ENCODE measurements at regions of chr2 and their contacts with region 1.

Region 1: GRCh38 chr2:217785544-217786045 is 217.2 kb downstream of the TNS1 start:
- DNase-seq: peak; percentile 85
- ATAC-seq: peak; percentile 64
- H3K4me3 Mint-ChIP-seq: no peak overlapping the region
- H3K27ac Mint-ChIP-seq: peak overlapping the region; percentile 39
- H3K4me1 Mint-ChIP-seq: peaks cover 11% of the 10 kb centered on the region
- H3K27me3 Mint-ChIP-seq: no peaks in the 10 kb centered on the region
- CTCF ChIP-seq: peak; percentile 93

Region 2: DNA sequence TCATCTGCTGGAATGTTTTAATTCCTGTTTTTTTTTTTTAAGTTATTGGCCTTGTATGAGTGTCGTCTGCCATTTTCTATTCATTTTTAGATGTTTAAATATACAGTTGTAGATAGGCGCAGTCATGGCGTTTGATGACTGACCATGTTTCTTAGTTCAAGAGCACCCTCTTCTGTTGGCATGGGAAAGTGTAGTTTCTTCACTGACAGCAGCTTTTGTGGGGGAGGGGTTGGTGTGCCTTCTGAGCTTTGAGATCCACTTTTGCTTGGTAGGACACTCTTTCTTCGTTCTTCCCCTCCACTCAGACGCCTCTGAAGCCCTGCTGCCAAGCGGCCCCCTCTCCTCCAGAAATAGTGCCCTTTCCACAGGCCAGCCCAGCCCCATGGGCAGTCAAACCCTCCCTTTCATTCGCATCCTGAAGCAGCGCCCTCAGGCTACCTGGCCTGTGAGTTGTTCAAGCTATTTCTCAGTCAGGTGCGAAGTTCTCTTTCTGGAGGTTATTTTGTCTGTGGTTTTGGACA is 274.8 kb before region 1 on chr2:
- CTCF ChIA-PET with region 1: no interaction called
- POLR2A ChIA-PET with region 1: no interaction called
- intact Hi-C with region 1: no loop called
- DNase-seq: peak; percentile 69
- ATAC-seq: peak; percentile 89
- H3K4me3 Mint-ChIP-seq: no peak overlapping the region
- H3K27ac Mint-ChIP-seq: no peak overlapping the region
- H3K4me1 Mint-ChIP-seq: peaks cover 8% of the 10 kb centered on the region
- H3K27me3 Mint-ChIP-seq: peaks cover 1% of the 10 kb centered on the region
- CTCF ChIP-seq: peak; percentile 70

Region 3: DNA sequence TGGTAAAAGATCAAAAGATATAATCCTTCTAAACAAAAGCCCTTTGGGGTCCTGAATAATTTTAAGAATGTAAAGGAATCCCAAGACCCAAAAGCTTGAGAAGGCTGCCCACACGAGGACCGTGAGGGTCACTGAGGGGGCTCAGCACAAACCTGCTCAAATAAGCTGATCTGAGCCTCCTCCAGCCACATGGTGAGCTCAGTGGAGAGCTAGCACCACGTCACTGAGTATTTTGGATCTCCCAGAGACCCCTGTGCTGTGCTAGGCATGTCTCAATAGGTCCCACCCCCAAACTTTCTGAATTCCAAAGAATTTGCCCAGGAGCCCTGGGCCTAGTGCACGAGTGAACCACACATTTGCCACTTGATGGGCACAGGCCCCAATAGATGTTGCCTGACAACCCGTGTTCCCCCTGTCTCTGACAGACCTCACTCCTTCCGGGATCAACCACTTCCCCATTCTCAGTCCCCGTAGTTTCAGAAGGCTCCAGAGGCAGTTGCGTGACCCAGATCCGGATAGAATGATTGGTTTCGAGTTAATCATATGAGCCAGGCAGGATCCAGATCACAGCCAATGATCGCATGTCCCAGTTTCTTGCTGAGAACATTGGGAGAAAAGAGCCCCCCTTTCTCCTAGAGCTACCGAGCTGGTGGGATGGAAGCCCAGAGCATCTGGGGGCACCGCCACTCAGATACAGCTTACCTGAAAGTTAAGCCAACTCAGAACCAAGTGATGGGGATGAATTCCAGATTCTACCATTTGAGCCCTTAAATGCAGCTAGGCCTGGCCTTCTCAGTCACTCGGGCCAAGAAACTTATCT is 13.4 kb after region 1 on chr2:
- CTCF ChIA-PET with region 1: interaction called, 26 read pairs
- POLR2A ChIA-PET with region 1: no interaction called
- intact Hi-C with region 1: no loop called
- DNase-seq: no peak
- ATAC-seq: no peak
- H3K4me3 Mint-ChIP-seq: no peak overlapping the region
- H3K27ac Mint-ChIP-seq: no peak overlapping the region
- H3K4me1 Mint-ChIP-seq: no peaks in the 10 kb centered on the region
- H3K27me3 Mint-ChIP-seq: no peaks in the 10 kb centered on the region
- CTCF ChIP-seq: no peak

Region 4: DNA sequence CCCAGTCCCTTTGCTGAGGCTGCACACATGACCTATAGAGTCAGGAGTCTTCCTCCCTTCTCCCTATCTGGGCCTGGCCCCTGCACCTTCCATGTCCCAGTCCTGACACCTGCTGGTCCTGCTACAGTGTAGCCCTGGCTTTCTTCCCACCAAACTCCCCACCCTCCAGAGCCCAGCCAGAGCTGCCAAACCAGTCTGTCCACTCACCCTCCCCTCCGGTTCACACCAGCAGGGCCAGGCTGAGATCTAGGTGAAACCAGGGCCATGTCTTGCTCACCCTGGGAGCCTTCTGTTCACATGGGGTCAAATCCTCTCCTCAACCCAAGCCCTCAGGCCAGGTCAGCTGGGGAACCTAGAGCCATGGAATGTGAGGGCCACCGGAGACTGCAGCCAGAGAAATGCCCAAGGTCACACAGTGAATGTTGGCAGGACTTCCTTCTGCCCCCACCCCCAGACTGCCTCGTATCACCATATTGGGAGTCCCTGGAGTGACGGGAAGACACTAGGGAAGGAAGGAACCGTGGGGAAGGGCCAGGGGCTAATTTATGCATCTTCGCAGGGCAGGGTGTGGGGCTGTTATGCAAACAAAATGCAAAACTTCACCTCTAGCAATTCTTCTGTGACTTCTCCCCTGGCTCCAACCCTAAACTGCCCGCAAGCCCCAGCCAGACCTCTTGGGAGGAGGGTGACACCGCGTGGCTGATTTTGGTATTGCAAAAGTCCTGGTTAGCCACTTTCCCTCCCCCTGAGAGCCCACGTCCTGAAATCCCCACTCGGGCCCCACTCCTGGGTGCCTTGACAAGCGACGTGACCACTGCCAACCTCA is 202.6 kb after region 1 on chr2:
- CTCF ChIA-PET with region 1: interaction called, 129 read pairs
- POLR2A ChIA-PET with region 1: no interaction called
- intact Hi-C with region 1: loop called (anchors 1 kb)
- DNase-seq: peak; percentile 86
- ATAC-seq: peak; percentile 83
- H3K4me3 Mint-ChIP-seq: no peak overlapping the region
- H3K27ac Mint-ChIP-seq: peak overlapping the region; percentile 30
- H3K4me1 Mint-ChIP-seq: peaks cover 10% of the 10 kb centered on the region
- H3K27me3 Mint-ChIP-seq: peaks cover 5% of the 10 kb centered on the region
- CTCF ChIP-seq: peak; percentile 91

Region 5: DNA sequence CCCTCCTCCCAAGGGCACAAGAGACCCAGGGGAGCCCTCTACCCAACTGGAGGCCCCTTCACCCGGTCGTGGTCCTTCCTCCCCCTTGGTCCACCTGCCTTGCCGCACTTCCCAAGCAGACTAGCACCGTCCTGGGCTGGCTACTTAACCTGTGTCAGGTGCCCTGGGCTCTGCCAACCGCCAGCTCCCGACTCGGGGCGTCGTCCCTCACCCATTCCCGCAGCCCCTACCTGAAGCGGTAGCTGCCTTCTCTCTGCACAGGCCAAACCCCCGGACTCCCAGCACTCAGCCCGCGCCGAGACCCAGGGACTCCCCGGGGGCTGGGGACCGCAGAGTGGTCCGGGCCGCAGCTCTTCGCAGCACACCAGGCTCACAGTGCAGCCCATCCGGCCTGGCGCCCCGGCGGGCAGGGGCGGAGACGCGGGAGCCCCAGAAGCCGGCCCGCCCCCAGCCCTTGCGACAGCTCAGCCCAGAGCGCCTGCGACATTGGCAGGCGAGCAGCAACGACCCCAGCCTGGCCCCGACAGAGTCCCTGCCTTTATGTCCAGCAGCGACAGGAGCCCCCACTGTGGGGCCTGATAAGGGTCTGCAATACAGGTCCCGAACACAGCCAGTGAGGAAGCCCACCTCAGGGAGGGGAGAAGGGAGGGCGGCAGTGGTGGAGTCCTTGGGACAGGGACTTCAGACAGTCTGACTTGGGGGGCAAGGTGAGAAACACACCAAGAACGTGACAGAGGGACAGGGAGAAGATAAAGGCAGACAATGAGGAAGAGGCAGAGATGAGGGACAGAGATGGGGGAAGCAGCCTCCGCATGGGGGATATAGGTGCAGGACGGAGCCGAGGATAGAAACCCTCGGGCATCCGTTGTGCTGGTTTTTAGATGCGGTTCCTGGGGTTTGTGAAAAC is 248.2 kb after region 1 on chr2:
- CTCF ChIA-PET with region 1: interaction called, 13 read pairs
- POLR2A ChIA-PET with region 1: no interaction called
- intact Hi-C with region 1: no loop called
- DNase-seq: no peak
- ATAC-seq: no peak
- H3K4me3 Mint-ChIP-seq: peak overlapping the region; percentile 57
- H3K27ac Mint-ChIP-seq: peak overlapping the region; percentile 4
- H3K4me1 Mint-ChIP-seq: peaks cover 7% of the 10 kb centered on the region
- H3K27me3 Mint-ChIP-seq: no peaks in the 10 kb centered on the region
- CTCF ChIP-seq: no peak

Region 6: DNA sequence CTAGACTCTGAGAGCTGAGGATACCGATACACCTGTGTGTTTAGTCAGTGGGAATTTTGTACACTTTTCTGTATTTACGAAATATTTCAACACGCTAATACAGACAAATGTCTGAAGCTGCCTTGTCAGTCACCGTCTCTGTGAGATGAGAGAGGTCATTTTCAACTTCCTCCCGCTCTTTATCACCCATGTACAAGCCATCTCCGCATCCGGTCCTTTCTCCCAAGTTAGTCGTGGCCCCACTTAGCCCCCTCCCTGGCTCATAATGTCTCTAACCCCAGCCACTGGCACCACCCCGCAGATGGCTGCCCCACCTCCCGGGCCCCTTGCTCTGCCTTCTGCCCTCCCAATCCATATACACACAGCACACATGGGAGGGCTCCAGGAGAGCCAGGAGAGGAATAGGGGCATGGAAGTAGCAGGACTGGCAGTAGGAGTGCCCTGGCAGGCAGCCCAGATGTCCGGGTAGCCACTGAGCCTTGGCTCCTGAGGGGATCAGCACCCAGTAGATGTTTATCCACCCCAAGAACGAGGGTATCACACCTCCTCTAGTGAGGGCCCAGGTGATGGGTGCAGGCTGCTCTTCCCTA is 281.4 kb after region 1 on chr2:
- CTCF ChIA-PET with region 1: interaction called, 25 read pairs
- POLR2A ChIA-PET with region 1: no interaction called
- intact Hi-C with region 1: no loop called
- DNase-seq: no peak
- ATAC-seq: no peak
- H3K4me3 Mint-ChIP-seq: no peak overlapping the region
- H3K27ac Mint-ChIP-seq: no peak overlapping the region
- H3K4me1 Mint-ChIP-seq: peaks cover 7% of the 10 kb centered on the region
- H3K27me3 Mint-ChIP-seq: peaks cover 12% of the 10 kb centered on the region
- CTCF ChIP-seq: no peak

Measured in activated CD8-positive, alpha-beta T cell treated with anti-CD3 and anti-CD28 coated beads for 36 hours (primary cell).